Lower leg skin (tissue), 4 donors: ENCODE measurements at regions of chr2 and their contacts with region 1.

Region 1: DNA sequence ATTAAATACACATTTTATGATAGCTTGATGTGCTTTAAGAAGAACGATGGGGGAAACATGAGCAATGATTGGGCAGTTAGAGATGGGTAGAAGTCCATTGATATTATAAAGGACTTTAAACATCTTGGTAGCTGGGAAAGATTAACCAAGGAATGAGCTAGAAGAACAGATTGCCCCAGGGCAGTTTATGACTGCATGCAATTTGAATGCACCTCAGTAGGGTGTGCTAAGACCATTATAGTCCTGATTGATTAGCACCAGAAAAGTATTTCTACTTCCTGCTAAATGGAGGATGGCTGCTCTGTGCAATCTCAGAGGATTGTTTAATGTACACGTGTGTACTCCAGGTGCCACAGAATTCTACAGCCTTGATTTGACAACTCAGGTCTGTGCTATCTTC is 641.9 kb downstream of the CNTNAP5 start:
- DNase-seq: no peak
- H3K4me3 ChIP-seq: no peak overlapping the region
- CTCF ChIP-seq: no peak
- POLR2A ChIP-seq: no peak

Region 2: DNA sequence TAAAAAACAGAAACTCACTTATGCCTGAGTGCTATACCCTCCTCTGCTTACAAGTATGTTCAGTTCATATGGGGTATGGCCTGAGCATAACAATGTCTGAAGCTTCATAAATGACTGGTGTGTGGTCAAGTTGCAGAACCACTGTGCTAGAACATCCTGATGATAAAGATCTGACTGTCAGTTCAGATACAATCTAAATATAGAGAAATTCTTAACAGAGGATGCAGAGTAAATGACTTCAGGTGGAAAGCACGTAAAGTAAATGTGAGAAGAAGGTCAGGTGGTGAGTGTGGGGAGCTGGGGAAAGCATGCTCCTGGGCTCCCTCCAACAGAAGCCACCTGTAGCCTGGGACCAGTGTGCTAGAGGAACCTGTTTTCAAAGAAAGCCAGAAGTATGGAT is 1985.3 kb before region 1 on chr2:
- intact Hi-C with region 1: no loop called
- DNase-seq: no peak
- H3K4me3 ChIP-seq: no peak overlapping the region
- CTCF ChIP-seq: no peak
- POLR2A ChIP-seq: no peak

Region 3: GRCh38 chr2:124692707-124693106 is 25.7 kb after region 1 on chr2:
- intact Hi-C with region 1: loop called (anchors 2 kb)
- DNase-seq: no peak
- H3K4me3 ChIP-seq: no peak overlapping the region
- CTCF ChIP-seq: no peak
- POLR2A ChIP-seq: no peak